ENCODE measurements at regions of chr2 and their contacts with region 1.

Region 1: DNA sequence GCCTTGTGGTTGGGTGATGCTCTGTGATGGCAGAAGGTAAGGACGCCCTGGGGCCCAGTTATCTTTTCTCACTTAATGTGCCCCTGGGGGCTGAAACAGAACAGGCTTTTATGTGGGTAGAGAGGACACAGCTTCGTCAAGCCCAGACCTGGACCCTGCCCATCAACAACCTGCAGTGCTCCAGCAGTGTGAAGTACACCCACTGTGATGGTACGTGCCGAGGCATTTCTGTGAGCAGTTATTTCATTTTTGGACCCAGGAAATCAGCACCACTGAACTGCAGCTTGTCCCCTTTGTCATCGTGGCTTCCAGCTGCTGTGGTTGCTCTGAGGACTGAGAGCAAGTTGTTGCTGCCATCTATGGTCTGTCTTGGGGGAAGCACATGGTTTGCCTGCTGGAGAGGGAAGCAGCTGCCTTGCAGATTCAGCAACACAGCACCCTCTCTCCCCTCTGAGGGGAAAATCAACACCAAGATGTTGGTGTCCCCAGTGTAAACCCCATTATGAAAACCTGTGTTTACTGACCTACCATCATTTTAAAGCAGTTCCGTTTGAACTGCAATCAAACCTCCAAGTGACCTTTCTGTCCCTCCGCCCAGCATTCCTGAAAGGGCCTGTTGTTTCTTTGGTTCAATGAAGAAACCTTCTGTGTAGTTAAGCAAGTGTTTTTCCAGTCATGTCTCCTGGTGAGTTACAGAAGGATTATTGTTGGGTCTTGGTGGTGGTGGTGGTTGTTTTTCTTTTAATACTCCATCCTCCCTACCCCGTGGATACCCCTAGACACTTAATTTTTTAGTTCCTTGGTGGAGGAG is 158.2 kb downstream of the MGAT5 start:
- DNase-seq: peak; percentile 86
- ATAC-seq: peak; percentile 63
- H3K4me3 ChIP-seq: no peak overlapping the region
- H3K27ac ChIP-seq: peak overlapping the region; percentile 24
- H3K4me1 ChIP-seq: peaks cover 39% of the 10 kb centered on the region
- H3K27me3 ChIP-seq: no peaks in the 10 kb centered on the region
- CTCF ChIP-seq: peak; percentile 87
- POLR2A ChIP-seq: 0 out of 2 replicates have a peak, but pooled peaks have one; percentile 28
- RAD21 ChIP-seq: peak; percentile 92

Region 2: DNA sequence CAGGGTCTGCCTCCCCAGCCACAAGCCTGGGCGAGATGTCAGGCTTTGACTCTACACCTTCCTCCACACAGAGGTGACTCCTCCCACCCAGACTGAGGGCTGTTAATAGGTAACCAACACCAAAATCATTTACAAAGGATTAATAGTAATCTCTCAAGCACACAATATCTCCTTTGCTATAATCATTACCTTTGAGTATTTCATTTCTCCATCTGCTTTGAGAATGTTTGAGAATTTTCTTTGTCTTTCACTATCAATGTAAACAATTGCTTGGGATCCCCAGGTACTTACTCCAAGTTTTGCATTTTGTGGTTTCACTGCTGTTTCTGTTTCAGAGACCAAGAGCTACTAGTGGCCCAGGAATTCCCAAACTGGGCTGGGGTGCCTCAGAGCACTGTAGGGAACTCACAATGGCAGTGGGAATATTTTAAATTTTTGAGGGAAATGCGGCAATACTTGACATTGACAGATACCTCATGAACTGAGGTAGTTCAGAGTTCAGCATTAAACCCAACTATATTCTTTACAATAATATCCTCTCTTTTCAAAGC is 324.6 kb before region 1 on chr2:
- CTCF ChIA-PET with region 1: no interaction called
- POLR2A ChIA-PET with region 1: no interaction called
- dilution Hi-C with region 1: no loop called
- in situ Hi-C with region 1: no loop called
- intact Hi-C with region 1: no loop called
- DNase-seq: no peak
- ATAC-seq: no peak
- H3K4me3 ChIP-seq: no peak overlapping the region
- H3K27ac ChIP-seq: no peak overlapping the region
- H3K4me1 ChIP-seq: peaks cover 5% of the 10 kb centered on the region; the same call in 1 of the 2 replicates
- H3K27me3 ChIP-seq: no peaks in the 10 kb centered on the region
- CTCF ChIP-seq: no peak
- POLR2A ChIP-seq: no peak
- RAD21 ChIP-seq: no peak

Region 3: DNA sequence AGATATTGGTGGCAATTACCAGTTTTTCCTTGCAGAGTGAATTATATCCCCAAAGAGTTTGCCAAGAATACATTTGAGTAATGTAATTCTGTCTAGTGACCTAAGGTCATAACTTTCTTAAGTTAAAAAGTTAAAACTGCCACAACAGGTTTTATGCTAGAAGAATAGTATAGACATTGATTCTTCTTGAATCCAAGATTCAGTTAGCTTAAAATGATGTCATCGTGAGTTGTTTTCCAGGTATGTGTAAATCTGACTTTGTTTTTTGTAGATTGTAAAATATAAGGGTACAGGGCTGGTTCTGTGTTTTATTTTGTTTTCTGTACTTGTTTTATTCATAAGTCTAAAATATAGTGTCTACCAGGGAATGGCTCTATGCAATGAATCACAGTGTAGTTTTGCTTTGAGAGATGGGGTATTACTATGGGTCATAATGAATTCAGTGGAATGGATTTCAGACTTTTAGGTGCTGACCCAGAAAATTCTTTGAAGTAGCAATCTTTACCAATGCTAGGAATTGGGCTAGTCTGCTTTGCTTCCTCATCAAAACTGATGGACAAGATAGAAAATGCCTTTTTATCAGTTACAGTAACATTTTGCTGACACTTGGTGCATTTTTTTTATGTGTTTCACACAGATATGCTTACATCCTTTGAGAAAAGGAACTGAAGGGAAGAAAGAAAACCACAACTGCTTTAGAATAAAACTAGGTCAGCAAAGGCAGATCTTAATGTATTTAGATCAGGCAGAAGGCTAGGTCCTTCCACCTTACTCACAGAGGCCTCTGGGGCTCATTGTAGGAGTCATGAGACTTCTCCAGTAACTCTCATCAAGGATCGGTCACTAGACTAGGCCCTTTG is 178.9 kb before region 1 on chr2:
- CTCF ChIA-PET with region 1: interaction called, 3 read pairs
- POLR2A ChIA-PET with region 1: no interaction called
- dilution Hi-C with region 1: no loop called
- in situ Hi-C with region 1: no loop called
- intact Hi-C with region 1: loop called (anchors 5 kb)
- DNase-seq: peak; percentile 59
- ATAC-seq: peak; percentile 12
- H3K4me3 ChIP-seq: no peak overlapping the region
- H3K27ac ChIP-seq: peak overlapping the region; percentile 12
- H3K4me1 ChIP-seq: peaks cover 26% of the 10 kb centered on the region
- H3K27me3 ChIP-seq: no peaks in the 10 kb centered on the region
- CTCF ChIP-seq: no peak
- POLR2A ChIP-seq: no peak
- RAD21 ChIP-seq: no peak

Region 4: DNA sequence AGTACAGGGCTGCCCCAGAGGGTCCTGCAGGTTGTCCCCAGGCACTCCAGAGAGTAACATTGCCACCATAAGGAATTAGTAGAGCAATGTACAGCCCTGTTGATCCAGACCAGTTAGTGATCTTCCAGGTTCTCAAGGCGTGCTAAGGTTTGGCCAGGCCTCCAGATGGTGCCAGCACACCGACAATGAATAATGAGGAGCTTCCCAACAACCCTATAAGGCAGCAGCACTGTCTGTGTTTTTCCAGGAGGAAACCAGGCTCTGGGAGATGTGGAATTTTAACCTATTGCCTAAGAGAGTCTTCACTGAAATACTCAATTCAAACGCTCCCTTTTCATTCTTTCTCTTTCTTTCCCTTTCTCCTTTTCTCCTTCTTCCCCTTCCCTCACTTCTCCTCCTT is 36.1 kb before region 1 on chr2:
- CTCF ChIA-PET with region 1: interaction called, 13 read pairs
- POLR2A ChIA-PET with region 1: no interaction called
- dilution Hi-C with region 1: no loop called
- in situ Hi-C with region 1: no loop called
- intact Hi-C with region 1: loop called (anchors 2 kb)
- DNase-seq: peak; percentile 75
- ATAC-seq: peak; percentile 27
- H3K4me3 ChIP-seq: no peak overlapping the region
- H3K27ac ChIP-seq: 0 out of 2 replicates have a peak overlapping the region, but pooled peaks have one; percentile 19
- H3K4me1 ChIP-seq: peaks cover 30% of the 10 kb centered on the region
- H3K27me3 ChIP-seq: no peaks in the 10 kb centered on the region
- CTCF ChIP-seq: peak; percentile 50
- POLR2A ChIP-seq: no peak
- RAD21 ChIP-seq: peak; percentile 58

Region 5: DNA sequence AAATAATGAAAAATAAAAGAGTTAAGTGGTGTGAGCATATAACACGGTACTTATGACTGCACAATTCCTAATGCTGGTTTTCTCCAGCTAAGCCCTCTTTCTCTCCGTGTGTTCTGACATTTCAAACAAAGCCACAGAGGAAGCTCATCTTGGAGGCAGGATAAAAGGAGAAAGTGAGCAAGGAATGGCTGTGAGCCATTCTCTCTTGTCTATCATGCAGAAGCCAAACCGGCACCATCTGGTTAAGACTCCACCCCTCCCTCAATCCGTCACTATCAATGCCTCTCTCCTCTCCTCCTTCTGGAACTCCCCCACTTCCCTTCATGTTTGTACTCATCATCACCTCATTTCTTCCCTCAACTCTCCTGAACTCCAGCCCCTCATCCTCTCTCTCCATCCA is 96.4 kb after region 1 on chr2:
- CTCF ChIA-PET with region 1: no interaction called
- POLR2A ChIA-PET with region 1: no interaction called
- dilution Hi-C with region 1: no loop called
- in situ Hi-C with region 1: no loop called
- intact Hi-C with region 1: no loop called
- DNase-seq: no peak
- ATAC-seq: no peak
- H3K4me3 ChIP-seq: no peak overlapping the region
- H3K27ac ChIP-seq: no peak overlapping the region
- H3K4me1 ChIP-seq: no peaks in the 10 kb centered on the region
- H3K27me3 ChIP-seq: peaks cover 18% of the 10 kb centered on the region
- CTCF ChIP-seq: no peak
- POLR2A ChIP-seq: no peak
- RAD21 ChIP-seq: no peak

Region 6: GRCh38 chr2:135839713-135840112 is 1427.7 kb after region 1 on chr2:
- CTCF ChIA-PET with region 1: no interaction called
- POLR2A ChIA-PET with region 1: no interaction called
- dilution Hi-C with region 1: no loop called
- in situ Hi-C with region 1: no loop called
- intact Hi-C with region 1: no loop called
- DNase-seq: peak; percentile 86
- ATAC-seq: peak; percentile 88
- H3K4me3 ChIP-seq: no peak overlapping the region
- H3K27ac ChIP-seq: no peak overlapping the region
- H3K4me1 ChIP-seq: peaks cover 5% of the 10 kb centered on the region
- H3K27me3 ChIP-seq: no peaks in the 10 kb centered on the region
- CTCF ChIP-seq: no peak
- POLR2A ChIP-seq: no peak
- RAD21 ChIP-seq: no peak